ENCODE measurements at regions of chr6 and their contacts with region 1.

Region 1: DNA sequence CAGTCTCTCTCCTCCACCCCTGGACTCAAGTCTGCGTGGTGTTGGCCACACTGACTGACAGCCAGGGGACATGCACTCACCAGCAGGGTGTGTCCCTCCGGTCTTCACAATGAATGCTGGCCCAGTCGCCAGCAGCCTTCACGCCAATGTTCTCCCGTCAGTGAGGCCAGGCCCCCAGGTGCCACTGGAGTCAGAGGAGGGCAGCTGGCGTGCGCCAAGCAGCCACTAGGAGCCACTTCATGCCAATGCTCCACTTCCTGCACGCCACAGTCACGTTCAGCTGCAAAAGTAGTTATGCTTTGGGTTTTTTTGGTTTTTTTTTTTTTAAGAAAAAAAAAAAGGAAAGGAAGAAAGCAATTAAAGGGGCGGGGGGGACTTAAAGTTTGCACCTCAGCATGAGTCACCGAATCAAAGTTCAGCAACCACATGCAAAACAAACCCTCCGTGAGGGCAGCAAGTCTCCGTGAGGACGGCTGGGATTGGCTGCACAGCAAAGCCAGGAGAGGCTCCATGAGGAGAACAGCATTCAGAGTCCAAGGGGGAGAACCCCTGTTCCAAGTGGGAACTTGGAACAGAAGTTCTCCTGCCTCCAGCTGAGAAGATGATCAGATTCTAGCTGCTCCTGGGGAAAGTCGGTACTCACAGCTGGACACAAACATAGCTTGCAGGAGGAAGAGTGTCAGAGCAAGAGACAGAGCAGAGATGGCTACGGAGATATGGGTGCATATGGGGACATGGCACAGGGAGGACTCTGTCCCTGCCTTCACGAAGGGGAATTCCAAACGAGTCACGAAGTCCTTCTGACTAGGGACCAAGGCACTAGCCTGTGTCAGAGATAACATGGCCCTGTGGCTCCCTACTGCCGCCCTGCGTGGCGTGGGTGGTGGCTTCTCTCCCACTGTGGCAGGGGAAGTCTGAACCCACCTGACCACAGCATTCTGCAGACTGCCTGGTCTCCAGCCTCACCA is at the start of gene ZC3H12D:
- DNase-seq: peak; percentile 90
- ATAC-seq: peak; percentile 73
- H3K4me3 Mint-ChIP-seq: peak within 1 kb of the TSS; percentile 90
- H3K27ac Mint-ChIP-seq: peak within 1 kb of the TSS; percentile 97
- H3K4me1 Mint-ChIP-seq: peaks cover 41% of the 10 kb centered on the region
- H3K27me3 Mint-ChIP-seq: no peaks in the 10 kb centered on the region
- total RNA-seq, gene ZC3H12D: 25.3 to 37.5 TPM

Region 2: GRCh38 chr6:149468179-149468578 is 16.8 kb before region 1 on chr6:
- CTCF ChIA-PET with region 1: interaction called, 13 read pairs
- DNase-seq: no peak
- ATAC-seq: peak; percentile 26
- H3K4me3 Mint-ChIP-seq: no peak overlapping the region
- H3K27ac Mint-ChIP-seq: peak overlapping the region; percentile 60
- H3K4me1 Mint-ChIP-seq: peaks cover 56% of the 10 kb centered on the region
- H3K27me3 Mint-ChIP-seq: no peaks in the 10 kb centered on the region